ENCODE measurements at regions of chr16 and their contacts with region 1.

Region 1: DNA sequence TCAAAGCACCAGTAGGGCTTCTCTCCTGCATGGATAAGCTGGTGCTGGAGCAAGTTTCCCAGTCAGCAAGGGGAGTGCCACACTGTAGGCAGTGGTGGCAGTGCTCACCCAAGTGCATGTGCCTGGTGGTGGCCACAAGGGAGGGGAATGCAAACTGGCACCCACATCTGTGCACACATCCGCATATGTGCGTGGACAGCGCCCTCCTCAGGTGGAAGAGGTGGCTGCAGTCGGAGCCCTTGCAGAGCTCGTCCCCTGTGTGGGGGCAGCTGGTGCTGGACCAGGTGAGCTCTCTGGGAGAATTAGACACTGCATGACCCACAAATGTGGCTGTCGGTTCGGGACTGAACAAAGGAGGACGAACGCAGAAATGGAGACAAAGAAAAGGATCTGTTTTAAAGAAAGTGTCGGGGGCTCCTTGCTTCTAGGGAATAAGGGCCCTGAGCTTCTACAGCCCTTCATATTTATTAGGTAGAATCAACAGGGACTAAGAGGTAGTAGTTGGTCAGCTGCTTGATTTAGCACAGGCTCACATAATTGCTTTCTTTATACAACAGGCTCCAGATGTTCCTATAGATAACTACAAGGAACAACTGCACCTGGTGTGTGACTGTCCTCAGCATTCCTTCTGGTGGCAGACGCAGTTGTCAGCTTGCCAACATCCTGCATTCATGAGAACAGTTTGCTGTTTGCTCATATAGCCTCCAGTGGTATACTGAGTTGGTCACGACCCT is 5.3 kb upstream of the ZNF689 start:
- DNase-seq: peak; percentile 98
- ATAC-seq: peak; percentile 90
- H3K4me3 Mint-ChIP-seq: no peak overlapping the region
- H3K27ac Mint-ChIP-seq: no peak overlapping the region
- H3K4me1 Mint-ChIP-seq: peaks cover 1% of the 10 kb centered on the region; the same call in 1 of the 2 replicates
- H3K27me3 Mint-ChIP-seq: peaks cover 17% of the 10 kb centered on the region
- CTCF ChIP-seq: peak; percentile 99

Region 2: DNA sequence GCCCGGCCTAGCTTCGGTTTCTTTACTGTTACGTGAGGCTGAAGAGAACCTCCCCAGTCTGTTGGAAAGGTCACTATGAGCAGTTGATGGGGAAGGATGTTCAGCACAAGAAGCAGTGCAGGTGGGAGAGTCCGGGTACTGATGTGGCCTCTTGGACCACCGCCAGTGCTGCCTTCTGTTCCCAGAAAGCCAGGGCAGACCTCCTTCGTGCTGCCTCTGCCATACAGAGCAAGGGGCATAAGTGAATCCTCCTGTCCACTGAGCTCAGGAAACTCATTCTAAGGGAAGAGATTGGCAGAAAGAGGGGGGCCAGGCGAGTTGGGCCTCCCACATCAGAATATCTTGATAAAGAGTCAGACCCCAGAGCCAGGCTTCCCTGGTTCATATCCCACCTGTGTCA is 536.0 kb before region 1 on chr16:
- CTCF ChIA-PET with region 1: no interaction called
- POLR2A ChIA-PET with region 1: no interaction called
- DNase-seq: no peak
- ATAC-seq: no peak
- H3K4me3 Mint-ChIP-seq: no peak overlapping the region
- H3K27ac Mint-ChIP-seq: 0 out of 2 replicates have a peak overlapping the region, but pooled peaks have one; percentile 23
- H3K4me1 Mint-ChIP-seq: peaks cover 22% of the 10 kb centered on the region
- H3K27me3 Mint-ChIP-seq: no peaks in the 10 kb centered on the region
- CTCF ChIP-seq: no peak

Region 3: DNA sequence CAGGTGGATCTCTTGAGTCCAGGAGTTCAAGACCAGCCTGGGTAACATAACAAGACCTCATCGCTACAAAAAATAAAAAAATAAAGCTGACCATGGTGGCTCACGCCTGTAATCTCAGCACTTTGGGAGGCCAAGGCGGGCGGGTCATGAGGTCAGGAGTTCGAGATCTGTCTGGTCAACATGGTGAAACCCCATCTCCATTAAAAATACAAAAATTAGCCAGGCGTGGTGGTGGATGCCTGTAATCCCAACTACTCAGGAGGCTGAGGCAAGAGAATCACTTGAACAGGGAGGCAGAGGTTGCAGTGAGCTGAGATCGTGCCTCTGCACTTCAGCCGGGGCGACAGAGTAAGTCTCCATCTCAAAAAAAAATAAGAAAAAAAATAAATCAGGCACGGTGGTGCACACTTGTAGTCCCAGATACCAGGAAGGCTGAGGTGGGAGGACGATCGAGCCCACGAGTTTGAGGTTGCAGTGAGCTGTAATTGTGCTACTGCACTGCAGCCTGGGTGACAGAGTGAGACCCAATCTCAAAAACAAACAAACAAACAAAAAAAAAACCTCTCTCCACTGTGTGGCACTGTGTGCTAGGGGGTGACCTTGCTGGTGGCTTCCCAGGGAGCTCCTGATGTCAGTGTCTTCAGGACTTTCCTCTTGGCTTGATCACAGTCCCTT is 472.7 kb before region 1 on chr16:
- CTCF ChIA-PET with region 1: interaction called, 10 read pairs
- POLR2A ChIA-PET with region 1: no interaction called
- DNase-seq: no peak
- ATAC-seq: peak; percentile 60
- H3K4me3 Mint-ChIP-seq: no peak overlapping the region
- H3K27ac Mint-ChIP-seq: no peak overlapping the region
- H3K4me1 Mint-ChIP-seq: no peaks in the 10 kb centered on the region
- H3K27me3 Mint-ChIP-seq: peaks cover 8% of the 10 kb centered on the region
- CTCF ChIP-seq: no peak

Region 4: GRCh38 chr16:30417529-30418349 is 197.8 kb before region 1 on chr16:
- CTCF ChIA-PET with region 1: interaction called, 35 read pairs
- POLR2A ChIA-PET with region 1: interaction called, 5 read pairs
- DNase-seq: peak; percentile 88
- ATAC-seq: peak; percentile 88
- H3K4me3 Mint-ChIP-seq: peak overlapping the region; percentile 54
- H3K27ac Mint-ChIP-seq: no peak overlapping the region
- H3K4me1 Mint-ChIP-seq: peaks cover 9% of the 10 kb centered on the region
- H3K27me3 Mint-ChIP-seq: no peaks in the 10 kb centered on the region
- CTCF ChIP-seq: no peak

Region 5: GRCh38 chr16:30526823-30527635 is 88.5 kb before region 1 on chr16:
- CTCF ChIA-PET with region 1: interaction called, 30 read pairs
- POLR2A ChIA-PET with region 1: interaction called, 3 read pairs
- DNase-seq: peak; percentile 99
- ATAC-seq: peak; percentile 91
- H3K4me3 Mint-ChIP-seq: peak overlapping the region; percentile 65
- H3K27ac Mint-ChIP-seq: peak overlapping the region; percentile 84
- H3K4me1 Mint-ChIP-seq: peaks cover 16% of the 10 kb centered on the region
- H3K27me3 Mint-ChIP-seq: no peaks in the 10 kb centered on the region
- CTCF ChIP-seq: no peak

Region 6: GRCh38 chr16:30571695-30572600 is 43.6 kb before region 1 on chr16 and contains the start of gene ZNF688:
- CTCF ChIA-PET with region 1: interaction called, 21 read pairs
- POLR2A ChIA-PET with region 1: interaction called, 14 read pairs
- DNase-seq: peak; percentile 93
- ATAC-seq: peak; percentile 87
- H3K4me3 Mint-ChIP-seq: peak within 1 kb of the TSS; percentile 91
- H3K27ac Mint-ChIP-seq: peak within 1 kb of the TSS; percentile 67
- H3K4me1 Mint-ChIP-seq: peaks cover 15% of the 10 kb centered on the region
- H3K27me3 Mint-ChIP-seq: no peaks in the 10 kb centered on the region; the same call in 1 of the 2 replicates
- CTCF ChIP-seq: no peak
- total RNA-seq, gene ZNF688: 4.2 to 6.0 TPM (median 4.9 TPM) in 3 replicates

Region 7: DNA sequence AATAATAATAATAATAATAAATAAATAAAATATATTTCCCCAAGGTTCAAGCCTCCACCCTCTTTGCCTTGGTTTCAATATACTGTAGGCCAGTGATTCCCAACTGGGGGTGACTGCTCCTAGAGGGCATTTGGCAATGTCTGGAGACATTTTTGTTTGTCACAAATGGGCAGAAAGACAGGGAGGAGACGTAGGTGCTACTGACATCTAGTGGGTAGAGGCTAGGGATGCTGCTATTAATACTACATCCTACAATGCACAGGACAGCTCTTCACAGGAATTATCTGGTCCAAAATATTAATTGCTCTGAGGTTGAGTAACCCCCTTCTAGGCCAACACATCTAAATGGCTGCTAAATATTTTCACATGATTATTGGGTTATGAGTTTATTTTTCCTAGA is 22.4 kb after region 1 on chr16:
- CTCF ChIA-PET with region 1: interaction called, 19 read pairs
- POLR2A ChIA-PET with region 1: no interaction called
- DNase-seq: no peak
- ATAC-seq: peak; percentile 16
- H3K4me3 Mint-ChIP-seq: no peak overlapping the region
- H3K27ac Mint-ChIP-seq: no peak overlapping the region
- H3K4me1 Mint-ChIP-seq: peaks cover 7% of the 10 kb centered on the region
- H3K27me3 Mint-ChIP-seq: peaks cover 3% of the 10 kb centered on the region
- CTCF ChIP-seq: no peak

Region 8: DNA sequence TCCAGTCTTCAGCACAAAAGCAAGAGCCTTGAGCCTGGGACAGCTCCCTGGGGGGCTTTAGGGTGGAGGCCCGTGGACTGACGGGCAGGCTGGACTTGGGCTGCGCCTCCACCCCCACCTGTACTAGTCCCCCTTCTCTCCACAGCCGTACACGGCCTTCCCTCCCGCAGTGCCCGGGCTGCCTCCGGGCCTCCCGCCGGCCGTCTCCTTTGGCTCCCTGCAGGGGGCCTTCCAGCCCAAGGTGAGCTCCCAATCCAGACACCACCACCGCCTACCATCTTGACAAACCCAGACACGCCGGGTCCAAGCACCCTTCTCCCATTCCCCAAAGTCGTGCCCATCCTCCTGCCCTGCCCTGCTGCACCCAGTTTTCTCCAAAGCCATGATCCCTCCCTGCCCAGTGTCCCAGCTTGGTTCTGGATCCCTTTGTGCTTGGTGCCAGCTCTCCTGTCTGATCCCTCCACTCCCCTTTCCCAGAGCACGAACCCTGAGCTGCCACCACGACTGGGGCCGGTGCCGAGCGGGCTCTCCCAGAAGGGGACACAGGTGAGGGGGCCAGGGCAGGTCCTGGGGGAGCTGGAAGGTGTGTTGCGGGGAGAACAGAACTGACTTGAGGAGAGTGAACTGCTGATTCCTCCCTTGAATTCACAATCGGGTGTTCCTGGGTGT is 49.8 kb after region 1 on chr16:
- CTCF ChIA-PET with region 1: no interaction called
- POLR2A ChIA-PET with region 1: no interaction called
- DNase-seq: no peak
- ATAC-seq: no peak
- H3K4me3 Mint-ChIP-seq: no peak overlapping the region
- H3K27ac Mint-ChIP-seq: no peak overlapping the region
- H3K4me1 Mint-ChIP-seq: peaks cover 4% of the 10 kb centered on the region; the same call in 1 of the 2 replicates
- H3K27me3 Mint-ChIP-seq: peaks cover 83% of the 10 kb centered on the region
- CTCF ChIP-seq: no peak